Astrocyte of the cerebellum (primary cell): ENCODE measurements at regions of chr9 and their contacts with region 1.

Region 1: GRCh38 chr9:72721067-72721466 is 199.7 kb downstream of the TMC1 start:
- DNase-seq: no peak
- H3K4me3 ChIP-seq: no peak overlapping the region
- CTCF ChIP-seq: no peak

Region 2: GRCh38 chr9:72763022-72763421 is 42.0 kb after region 1 on chr9:
- in situ Hi-C with region 1: no loop called
- DNase-seq: no peak
- H3K4me3 ChIP-seq: no peak overlapping the region
- CTCF ChIP-seq: no peak

Region 3: GRCh38 chr9:72794947-72795346 is 73.9 kb after region 1 on chr9:
- in situ Hi-C with region 1: loop called (anchors 5 kb)
- DNase-seq: no peak
- H3K4me3 ChIP-seq: no peak overlapping the region
- CTCF ChIP-seq: no peak